ENCODE measurements at regions of chr18 and their contacts with region 1.

Region 1: GRCh38 chr18:11553098-11553940 is 56.1 kb upstream of the SLC35G4 start:
- DNase-seq: peak; percentile 20
- H3K4me3 Mint-ChIP-seq: no peak overlapping the region
- H3K27ac Mint-ChIP-seq: no peak overlapping the region
- H3K4me1 Mint-ChIP-seq: no peaks in the 10 kb centered on the region
- H3K27me3 Mint-ChIP-seq: peaks cover 12% of the 10 kb centered on the region

Region 2: DNA sequence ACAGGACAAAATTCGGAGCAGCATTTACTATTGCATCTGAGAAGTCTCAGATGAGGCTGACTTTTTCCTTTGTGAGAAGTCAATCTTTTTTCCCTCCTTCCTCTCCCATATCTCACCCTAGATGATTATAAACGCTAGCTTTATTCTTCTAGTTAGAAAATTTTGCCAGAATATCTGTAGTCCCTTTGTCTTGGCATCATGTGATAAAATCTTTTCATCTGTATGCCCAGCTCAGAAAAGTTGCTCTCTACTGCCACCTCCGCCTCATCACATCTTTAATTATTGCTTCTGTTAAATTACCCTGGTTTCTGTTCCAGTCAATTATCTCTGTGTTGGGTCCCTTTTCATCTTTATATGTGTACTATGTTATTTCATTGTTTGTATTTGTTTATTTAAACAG is 154.7 kb before region 1 on chr18:
- CTCF ChIA-PET with region 1: no interaction called
- POLR2A ChIA-PET with region 1: no interaction called
- DNase-seq: no peak
- H3K4me3 Mint-ChIP-seq: no peak overlapping the region
- H3K27ac Mint-ChIP-seq: no peak overlapping the region
- H3K4me1 Mint-ChIP-seq: no peaks in the 10 kb centered on the region
- H3K27me3 Mint-ChIP-seq: peaks cover 4% of the 10 kb centered on the region

Region 3: GRCh38 chr18:11482271-11482670 is 71.0 kb before region 1 on chr18:
- CTCF ChIA-PET with region 1: no interaction called
- POLR2A ChIA-PET with region 1: no interaction called
- DNase-seq: no peak
- H3K4me3 Mint-ChIP-seq: no peak overlapping the region
- H3K27ac Mint-ChIP-seq: no peak overlapping the region
- H3K4me1 Mint-ChIP-seq: no peaks in the 10 kb centered on the region
- H3K27me3 Mint-ChIP-seq: no peaks in the 10 kb centered on the region

Region 4: DNA sequence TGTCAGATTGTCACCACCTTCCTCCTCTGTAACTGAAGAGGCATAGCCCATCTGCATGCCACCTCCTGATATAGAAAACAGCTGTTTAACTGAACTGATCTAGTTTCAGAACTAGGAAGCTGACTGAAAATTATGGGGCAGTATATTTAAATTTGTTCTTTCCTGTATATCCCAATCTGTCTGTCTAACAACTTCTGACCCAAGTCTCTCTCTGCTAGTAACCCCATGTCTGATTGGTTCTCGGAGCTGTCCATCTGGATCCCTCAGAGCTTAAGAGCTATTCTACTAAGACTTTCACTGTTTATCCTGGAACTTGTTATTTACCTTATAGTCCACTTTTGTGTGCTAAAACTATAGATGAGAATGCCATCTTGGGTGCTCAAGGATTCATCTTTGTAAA is 12.1 kb before region 1 on chr18:
- CTCF ChIA-PET with region 1: interaction called, 11 read pairs
- POLR2A ChIA-PET with region 1: no interaction called
- DNase-seq: no peak
- H3K4me3 Mint-ChIP-seq: no peak overlapping the region
- H3K27ac Mint-ChIP-seq: no peak overlapping the region
- H3K4me1 Mint-ChIP-seq: no peaks in the 10 kb centered on the region
- H3K27me3 Mint-ChIP-seq: no peaks in the 10 kb centered on the region

Region 5: DNA sequence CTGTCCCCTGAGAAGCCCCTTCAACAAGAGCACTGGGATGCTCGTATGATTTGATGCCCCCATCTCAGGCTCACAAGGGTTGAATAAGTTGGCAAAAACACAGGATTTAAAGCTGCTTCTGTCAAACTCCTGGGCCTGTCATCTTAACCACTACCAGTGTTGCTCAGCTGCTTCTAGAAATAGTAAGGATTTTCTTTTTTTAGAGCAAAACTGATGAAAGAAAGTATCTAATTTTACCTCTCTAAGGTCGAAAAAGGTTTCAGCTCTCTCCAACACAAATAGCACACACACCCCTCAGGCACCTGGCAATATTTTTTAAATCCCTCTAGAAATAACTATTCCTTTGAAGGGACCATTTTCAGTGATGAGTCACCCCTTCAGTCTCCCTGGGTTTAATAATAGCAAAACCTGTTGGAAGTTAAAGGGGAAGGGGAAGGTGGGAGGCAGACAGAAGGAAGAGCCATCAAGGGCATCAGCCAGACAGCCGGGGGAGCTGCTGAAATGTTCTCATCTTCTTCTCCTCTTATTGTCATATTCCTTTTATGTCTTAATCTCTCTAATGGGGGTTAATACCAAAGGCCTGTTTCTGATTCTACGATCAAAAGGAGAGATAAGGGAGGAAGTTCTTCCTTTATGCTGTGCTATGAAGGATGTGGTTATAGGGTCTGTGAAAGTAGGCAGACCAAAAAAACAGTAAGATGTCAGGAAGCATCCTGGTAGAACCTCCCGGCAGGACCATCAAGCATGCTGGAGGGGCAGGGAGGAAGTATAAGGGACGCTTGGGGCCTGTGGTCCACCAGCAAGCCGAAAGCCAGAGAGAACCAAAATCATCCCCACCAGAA is 24.2 kb after region 1 on chr18:
- CTCF ChIA-PET with region 1: no interaction called
- POLR2A ChIA-PET with region 1: no interaction called
- DNase-seq: no peak
- H3K4me3 Mint-ChIP-seq: no peak overlapping the region
- H3K27ac Mint-ChIP-seq: no peak overlapping the region
- H3K4me1 Mint-ChIP-seq: peaks cover 12% of the 10 kb centered on the region
- H3K27me3 Mint-ChIP-seq: peaks cover 12% of the 10 kb centered on the region